IMR-90 (cell line): ENCODE measurements at regions of chr7 and their contacts with region 1.

Region 1: DNA sequence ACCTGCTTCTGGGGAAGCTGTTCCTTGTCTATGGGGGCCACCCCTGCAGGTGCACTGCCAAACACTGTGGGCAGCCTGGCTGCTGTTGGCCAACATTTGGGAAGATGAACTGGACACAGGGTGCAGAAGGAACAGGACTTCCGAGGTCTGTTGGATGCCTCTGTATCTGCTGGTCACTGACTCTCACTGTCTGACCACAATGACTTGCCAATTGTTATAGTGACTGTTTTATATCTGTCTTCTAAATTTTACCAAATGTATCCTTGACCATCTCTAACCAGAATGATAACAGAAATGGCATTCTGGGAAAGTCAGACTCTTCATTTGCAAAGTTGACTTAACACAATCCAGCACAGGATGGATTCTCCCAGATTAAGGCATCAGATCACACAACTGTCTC is 214.0 kb upstream of the PRSS58 start:
- DNase-seq: no peak
- ATAC-seq: no peak
- H3K4me3 ChIP-seq: no peak overlapping the region
- H3K27ac ChIP-seq: no peak overlapping the region
- H3K4me1 ChIP-seq: peaks cover 5% of the 10 kb centered on the region
- H3K27me3 ChIP-seq: no peaks in the 10 kb centered on the region
- CTCF ChIP-seq: no peak
- POLR2A ChIP-seq: no peak
- RAD21 ChIP-seq: no peak

Region 2: GRCh38 chr7:141663081-141663849 is 808.6 kb before region 1 on chr7:
- CTCF ChIA-PET with region 1: no interaction called
- POLR2A ChIA-PET with region 1: no interaction called
- dilution Hi-C with region 1: no loop called
- in situ Hi-C with region 1: no loop called
- intact Hi-C with region 1: no loop called
- DNase-seq: no peak
- ATAC-seq: no peak
- H3K4me3 ChIP-seq: no peak overlapping the region
- H3K27ac ChIP-seq: no peak overlapping the region
- H3K4me1 ChIP-seq: no peaks in the 10 kb centered on the region
- H3K27me3 ChIP-seq: no peaks in the 10 kb centered on the region
- CTCF ChIP-seq: no peak
- POLR2A ChIP-seq: no peak
- RAD21 ChIP-seq: no peak

Region 3: GRCh38 chr7:142508258-142508689 is 36.5 kb after region 1 on chr7:
- CTCF ChIA-PET with region 1: no interaction called
- POLR2A ChIA-PET with region 1: no interaction called
- dilution Hi-C with region 1: no loop called
- in situ Hi-C with region 1: no loop called
- intact Hi-C with region 1: loop called (anchors 1 kb)
- DNase-seq: no peak
- ATAC-seq: no peak
- H3K4me3 ChIP-seq: no peak overlapping the region
- H3K27ac ChIP-seq: no peak overlapping the region
- H3K4me1 ChIP-seq: no peaks in the 10 kb centered on the region
- H3K27me3 ChIP-seq: peaks cover 30% of the 10 kb centered on the region
- CTCF ChIP-seq: no peak
- POLR2A ChIP-seq: no peak
- RAD21 ChIP-seq: no peak